ENCODE measurements at regions of chr11 and their contacts with region 1.

Region 1: GRCh38 chr11:44538375-44539054 is 26.9 kb upstream of the CD82 start:
- DNase-seq: peak in 1 of 2 donors; percentile 83
- H3K4me3 ChIP-seq: no peak overlapping the region
- H3K27ac ChIP-seq: no peak overlapping the region
- H3K4me1 ChIP-seq: no peaks in the 10 kb centered on the region
- H3K27me3 ChIP-seq: no peaks in the 10 kb centered on the region
- CTCF ChIP-seq: peak; percentile 86 to 95 (median 94)

Region 2: DNA sequence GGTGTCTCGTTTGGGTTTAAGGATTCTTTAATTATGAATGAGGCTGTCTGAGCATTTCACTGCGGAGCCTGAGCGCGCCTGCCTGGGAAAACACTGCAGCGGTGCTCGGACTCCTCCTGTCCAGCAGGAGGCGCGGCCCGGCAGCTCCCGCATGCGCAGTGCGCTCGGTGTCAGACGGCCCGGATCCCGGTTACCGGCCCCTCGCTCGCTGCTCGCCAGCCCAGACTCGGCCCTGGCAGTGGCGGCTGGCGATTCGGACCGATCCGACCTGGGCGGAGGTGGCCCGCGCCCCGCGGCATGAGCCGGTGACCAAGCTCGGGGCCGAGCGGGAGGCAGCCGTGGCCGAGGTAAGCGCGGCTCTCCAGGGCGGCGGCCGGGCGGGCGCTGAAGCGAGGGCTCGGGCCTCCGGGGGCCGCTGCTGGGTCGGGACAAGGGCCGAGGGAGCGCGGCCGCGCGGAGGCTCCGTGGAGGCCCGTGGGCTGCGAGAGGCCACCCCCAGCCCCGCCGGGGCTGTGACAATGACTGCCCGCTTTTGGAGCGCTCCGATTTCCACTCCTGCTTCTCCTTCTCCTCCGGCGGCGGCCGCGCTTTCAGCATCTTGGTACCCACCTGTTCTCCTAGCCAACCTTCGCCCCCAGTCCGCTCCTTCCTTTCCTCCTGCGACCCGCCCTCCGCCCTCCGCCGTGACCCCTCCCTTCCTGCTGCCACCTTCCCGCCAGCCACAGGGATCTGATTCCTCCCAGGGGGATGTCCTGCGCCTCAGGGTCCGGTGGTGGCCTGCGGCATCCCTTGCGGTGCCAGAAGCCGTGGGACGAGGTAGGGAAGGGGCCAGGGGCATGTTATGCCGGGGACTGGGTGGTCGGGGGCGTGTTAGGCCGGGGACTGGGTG is 442.8 kb before region 1 on chr11 and contains the start of gene EXT2:
- intact Hi-C with region 1: loop called (anchors 1 kb)
- DNase-seq: peak; percentile 18 to 91
- H3K4me3 ChIP-seq: peak within 1 kb of the TSS; percentile 78 to 94
- H3K27ac ChIP-seq: peak within 1 kb of the TSS; percentile 69 to 71
- H3K4me1 ChIP-seq: peaks cover 0 to 9% of the 10 kb centered on the region in 2 donors
- H3K27me3 ChIP-seq: no peaks in the 10 kb centered on the region
- CTCF ChIP-seq: peak; percentile 74 to 88 (median 87)
- total RNA-seq, gene EXT2: 342 TPM

Region 3: DNA sequence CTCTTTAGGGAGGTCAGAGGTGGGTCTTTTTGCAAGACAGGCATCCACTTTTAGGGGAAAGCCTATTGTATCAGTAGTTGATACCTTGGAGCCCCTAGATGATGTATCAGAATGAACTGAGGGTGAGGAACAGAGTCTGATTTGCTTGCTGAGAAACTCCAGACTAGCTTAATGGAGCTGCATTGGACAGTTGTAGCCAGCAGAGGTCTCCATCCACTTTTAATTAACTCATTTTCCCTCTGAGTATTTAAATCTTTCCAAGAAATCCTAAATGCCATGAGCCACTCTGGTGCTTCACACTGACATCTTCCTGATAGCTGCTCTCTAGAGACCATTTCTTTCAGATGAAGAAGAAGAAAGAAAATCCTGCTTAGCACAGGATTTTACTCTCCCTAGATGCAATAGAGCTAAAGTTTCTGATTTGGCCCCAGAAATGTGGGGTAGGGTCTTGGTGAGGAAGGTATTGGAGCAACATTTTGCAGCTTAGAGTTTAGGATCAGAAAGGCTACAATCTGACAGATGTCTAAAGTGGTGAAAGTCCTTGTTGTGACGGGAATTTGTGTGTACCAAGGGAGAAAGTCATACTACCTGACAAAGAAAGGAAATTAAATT is 405.1 kb before region 1 on chr11:
- intact Hi-C with region 1: loop called (anchors 5 kb)
- DNase-seq: no peak
- H3K4me3 ChIP-seq: no peak overlapping the region
- H3K27ac ChIP-seq: no peak overlapping the region
- H3K4me1 ChIP-seq: peaks cover 0 to 9% of the 10 kb centered on the region in 2 donors
- H3K27me3 ChIP-seq: no peaks in the 10 kb centered on the region
- CTCF ChIP-seq: peak; percentile 32 to 61 (median 41)

Region 4: DNA sequence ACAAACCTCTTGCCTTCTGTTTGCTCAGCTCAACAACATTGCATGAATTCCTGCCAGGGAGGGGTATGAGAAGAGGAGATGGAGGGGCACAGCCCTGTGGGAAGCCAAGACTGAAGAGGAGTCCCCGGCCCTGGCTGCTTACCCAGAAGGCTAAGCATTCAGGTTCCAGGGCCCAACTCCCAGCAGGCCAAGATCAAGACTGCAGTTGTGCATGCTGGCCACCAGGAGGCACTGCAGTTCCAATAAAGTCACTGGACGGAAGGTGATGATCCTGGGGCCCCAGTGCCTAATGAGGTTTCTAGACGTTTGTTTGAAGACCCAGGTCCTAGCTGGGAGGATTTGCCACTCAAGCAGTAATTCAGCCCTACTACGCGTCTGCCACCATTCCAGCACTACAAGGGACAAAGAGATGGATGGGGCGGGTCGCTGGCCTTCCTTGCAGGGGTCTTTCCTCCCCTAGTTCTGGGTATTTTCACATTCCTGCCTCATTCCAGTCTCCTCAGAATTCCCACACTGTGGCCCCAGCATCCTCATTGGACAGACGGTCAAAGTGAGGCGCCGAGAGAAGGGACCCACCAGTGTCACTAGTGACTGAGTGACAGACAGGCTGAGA is 252.1 kb before region 1 on chr11:
- intact Hi-C with region 1: loop called (anchors 1 kb)
- DNase-seq: no peak
- H3K4me3 ChIP-seq: no peak overlapping the region
- H3K27ac ChIP-seq: no peak overlapping the region
- H3K4me1 ChIP-seq: no peaks in the 10 kb centered on the region
- H3K27me3 ChIP-seq: no peaks in the 10 kb centered on the region
- CTCF ChIP-seq: peak; percentile 65 to 88 (median 81)

Measured in ascending aorta (tissue), 2 donors.